Activated CD4-positive, alpha-beta memory T cell treated with anti-CD3 and anti-CD28 coated beads for 36 hours (primary cell): ENCODE measurements at regions of chr20 and their contacts with region 1.

Region 1: GRCh38 chr20:35303735-35304491 is 11.7 kb upstream of the FAM83C start:
- DNase-seq: peak; percentile 92
- H3K4me3 Mint-ChIP-seq: no peak overlapping the region
- H3K27ac Mint-ChIP-seq: no peak overlapping the region
- H3K4me1 Mint-ChIP-seq: peaks cover 60% of the 10 kb centered on the region
- H3K27me3 Mint-ChIP-seq: no peaks in the 10 kb centered on the region

Region 2: DNA sequence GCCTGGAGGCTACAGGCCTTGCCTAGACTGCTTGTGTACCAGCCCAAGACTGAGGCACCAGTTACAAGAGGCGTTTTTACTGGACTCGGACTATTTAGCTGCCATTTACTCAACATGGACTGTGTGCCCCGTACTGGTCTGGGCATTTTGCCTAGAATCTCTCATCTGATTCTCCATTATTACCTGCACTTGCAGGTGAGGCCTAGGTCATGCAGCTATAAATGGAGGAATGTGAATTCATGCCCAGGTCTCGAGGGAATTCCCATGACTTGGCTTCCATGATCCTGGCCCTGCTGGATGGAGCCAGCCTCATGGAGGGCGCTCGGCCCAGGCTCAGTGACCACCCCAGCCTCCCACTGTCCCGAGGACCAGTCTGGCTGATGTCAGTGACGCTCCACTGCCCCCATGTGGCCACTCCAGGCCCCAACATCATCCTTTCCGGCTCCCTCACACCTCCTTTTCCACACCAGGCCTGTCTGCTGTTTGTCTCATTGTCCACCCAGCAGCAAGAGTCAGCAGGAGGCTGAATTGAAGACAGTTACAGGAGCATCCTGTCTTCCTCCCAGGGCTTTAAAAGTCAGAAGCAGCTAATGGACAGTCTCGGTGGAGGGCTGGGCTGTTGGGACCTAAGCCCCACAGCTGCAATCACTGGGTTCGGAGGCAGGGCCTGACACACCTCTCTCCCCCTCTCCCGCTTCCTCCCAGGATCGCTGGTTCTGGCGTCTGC is 34.7 kb before region 1 on chr20:
- CTCF ChIA-PET with region 1: no interaction called
- POLR2A ChIA-PET with region 1: no interaction called
- intact Hi-C with region 1: no loop called
- DNase-seq: peak; percentile 65
- H3K4me3 Mint-ChIP-seq: no peak overlapping the region
- H3K27ac Mint-ChIP-seq: no peak overlapping the region
- H3K4me1 Mint-ChIP-seq: peaks cover 2% of the 10 kb centered on the region
- H3K27me3 Mint-ChIP-seq: no peaks in the 10 kb centered on the region

Region 3: DNA sequence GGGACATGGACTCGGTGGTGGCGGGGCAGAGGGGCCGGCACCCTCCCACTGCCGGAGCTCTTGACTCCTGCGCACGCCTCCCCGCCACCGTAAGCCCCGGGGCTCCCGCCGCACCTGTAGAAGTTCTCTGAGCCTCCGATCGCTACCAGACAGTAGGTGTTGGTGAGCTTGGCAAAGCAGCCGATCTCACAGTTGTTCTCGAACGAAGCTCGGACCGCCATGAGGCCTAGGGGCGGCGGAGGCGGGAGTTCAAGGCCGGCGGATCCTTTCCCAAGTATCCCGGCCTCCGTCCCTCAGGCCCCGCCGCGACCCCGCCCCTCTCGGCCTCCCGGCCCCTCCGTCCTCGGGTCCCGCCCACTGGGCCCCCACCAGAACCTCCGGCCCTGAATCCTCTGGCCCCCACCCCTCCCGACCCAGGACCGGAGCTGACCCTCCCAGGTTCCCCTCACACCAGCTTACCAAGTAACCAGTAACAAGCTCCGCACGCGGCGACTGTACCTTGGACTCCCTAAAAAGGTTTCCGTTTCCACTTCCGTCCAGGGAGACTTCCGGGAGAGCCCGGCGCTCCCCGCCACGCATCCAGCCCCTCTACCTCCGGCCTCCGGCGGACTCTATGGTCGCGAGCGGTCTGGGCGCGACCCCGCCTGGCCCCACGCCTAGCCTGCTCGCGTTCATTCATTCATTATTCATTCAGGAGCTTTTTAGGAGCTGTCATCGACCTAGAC is 19.5 kb before region 1 on chr20 and contains the start of gene EIF6:
- CTCF ChIA-PET with region 1: interaction called, 20 read pairs
- POLR2A ChIA-PET with region 1: interaction called, 15 read pairs
- intact Hi-C with region 1: loop called (anchors 2 kb)
- DNase-seq: peak; percentile 88
- H3K4me3 Mint-ChIP-seq: peak within 1 kb of the TSS; percentile 78
- H3K27ac Mint-ChIP-seq: peak within 1 kb of the TSS; percentile 64
- H3K4me1 Mint-ChIP-seq: peaks cover 25% of the 10 kb centered on the region
- H3K27me3 Mint-ChIP-seq: no peaks in the 10 kb centered on the region
- total RNA-seq, gene EIF6: 115 to 120 TPM

Region 4: GRCh38 chr20:35329435-35330139 is 25.7 kb after region 1 on chr20:
- CTCF ChIA-PET with region 1: interaction called, 151 read pairs
- POLR2A ChIA-PET with region 1: interaction called, 7 read pairs
- intact Hi-C with region 1: loop called (anchors 1 kb)
- DNase-seq: peak; percentile 82
- H3K4me3 Mint-ChIP-seq: no peak overlapping the region
- H3K27ac Mint-ChIP-seq: no peak overlapping the region
- H3K4me1 Mint-ChIP-seq: peaks cover 33% of the 10 kb centered on the region
- H3K27me3 Mint-ChIP-seq: no peaks in the 10 kb centered on the region

Region 5: DNA sequence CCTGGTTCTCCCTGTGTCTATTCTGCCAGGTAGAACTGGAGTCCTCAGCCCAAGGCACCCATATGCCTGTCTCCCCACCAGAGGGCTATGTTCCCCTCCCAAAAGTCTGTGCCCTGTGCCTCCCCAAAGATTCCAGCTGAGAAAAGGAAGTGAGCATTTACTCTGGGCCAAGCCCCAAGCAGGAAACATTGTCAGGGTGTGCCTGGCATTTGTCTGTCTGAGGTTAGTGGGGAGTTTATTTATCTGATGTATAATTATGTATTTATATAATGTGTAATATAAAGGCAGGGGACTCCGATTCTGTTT is 128.5 kb after region 1 on chr20:
- CTCF ChIA-PET with region 1: interaction called, 18 read pairs
- POLR2A ChIA-PET with region 1: no interaction called
- intact Hi-C with region 1: no loop called
- DNase-seq: no peak
- H3K4me3 Mint-ChIP-seq: no peak overlapping the region
- H3K27ac Mint-ChIP-seq: no peak overlapping the region
- H3K4me1 Mint-ChIP-seq: no peaks in the 10 kb centered on the region
- H3K27me3 Mint-ChIP-seq: no peaks in the 10 kb centered on the region

Region 6: DNA sequence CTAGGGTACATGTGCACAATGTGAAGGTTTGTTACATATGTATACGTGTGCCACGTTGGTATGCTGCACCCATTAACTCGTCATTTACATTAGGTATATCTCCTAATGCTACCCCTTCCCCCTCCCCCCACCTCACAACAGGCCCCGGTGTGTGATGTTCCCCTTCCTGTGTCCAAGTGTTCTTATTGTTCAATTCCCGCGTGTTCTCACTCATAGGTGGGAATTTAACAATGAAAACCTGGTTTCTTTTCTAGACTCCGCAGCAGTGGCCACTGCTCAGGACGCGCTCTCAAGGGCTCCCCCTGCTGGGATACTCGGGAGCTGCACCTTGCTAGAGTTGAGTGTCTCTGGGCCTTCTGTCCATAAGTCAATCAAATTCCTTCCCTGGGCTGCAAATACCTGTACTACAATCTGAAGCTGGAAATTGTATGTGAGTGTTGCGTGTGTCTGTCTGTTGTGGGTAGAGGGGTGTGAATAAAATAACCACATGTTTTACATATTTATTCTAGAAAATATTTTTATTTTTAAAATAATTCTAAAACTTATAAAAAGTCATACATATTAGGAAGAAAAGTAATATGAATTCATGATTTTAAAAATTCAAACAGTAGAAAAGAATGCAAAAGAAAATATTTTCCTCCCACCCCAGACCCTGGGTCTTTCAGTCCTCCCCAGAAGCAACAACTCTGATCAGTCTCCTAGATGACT is 143.3 kb after region 1 on chr20:
- CTCF ChIA-PET with region 1: interaction called, 99 read pairs
- POLR2A ChIA-PET with region 1: interaction called, 4 read pairs
- intact Hi-C with region 1: loop called (anchors 1 kb)
- DNase-seq: peak; percentile 94
- H3K4me3 Mint-ChIP-seq: peak overlapping the region; percentile 83
- H3K27ac Mint-ChIP-seq: no peak overlapping the region
- H3K4me1 Mint-ChIP-seq: peaks cover 7% of the 10 kb centered on the region
- H3K27me3 Mint-ChIP-seq: peaks cover 4% of the 10 kb centered on the region